ENCODE measurements at regions of chr9 and their contacts with region 1.

Region 1: GRCh38 chr9:95726756-95727155 is 148.7 kb upstream of the ERCC6L2 start:
- DNase-seq: no peak
- ATAC-seq: peak; percentile 44 to 63

Region 2: DNA sequence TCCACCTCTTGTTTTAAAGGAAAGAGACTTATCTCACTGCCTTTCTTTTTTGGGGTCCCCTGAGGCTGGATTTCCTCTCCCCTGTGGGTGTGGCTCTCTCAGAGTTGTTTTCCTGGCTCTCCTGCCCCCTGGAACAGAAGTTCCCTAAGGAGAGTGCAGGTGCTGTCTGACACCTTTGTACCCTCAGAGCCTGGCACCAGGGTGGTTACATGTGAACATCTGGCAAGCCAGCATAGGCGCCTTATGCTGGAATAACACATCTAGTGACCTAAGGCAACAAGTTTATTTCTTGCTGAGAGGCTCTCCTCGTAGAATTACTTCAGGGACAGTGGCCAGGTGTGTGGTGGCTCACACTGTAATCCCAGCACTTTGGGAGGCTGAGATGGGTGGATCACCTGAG is 37.1 kb before region 1 on chr9:
- intact Hi-C with region 1: no loop called
- DNase-seq: no peak
- ATAC-seq: no peak

Region 3: DNA sequence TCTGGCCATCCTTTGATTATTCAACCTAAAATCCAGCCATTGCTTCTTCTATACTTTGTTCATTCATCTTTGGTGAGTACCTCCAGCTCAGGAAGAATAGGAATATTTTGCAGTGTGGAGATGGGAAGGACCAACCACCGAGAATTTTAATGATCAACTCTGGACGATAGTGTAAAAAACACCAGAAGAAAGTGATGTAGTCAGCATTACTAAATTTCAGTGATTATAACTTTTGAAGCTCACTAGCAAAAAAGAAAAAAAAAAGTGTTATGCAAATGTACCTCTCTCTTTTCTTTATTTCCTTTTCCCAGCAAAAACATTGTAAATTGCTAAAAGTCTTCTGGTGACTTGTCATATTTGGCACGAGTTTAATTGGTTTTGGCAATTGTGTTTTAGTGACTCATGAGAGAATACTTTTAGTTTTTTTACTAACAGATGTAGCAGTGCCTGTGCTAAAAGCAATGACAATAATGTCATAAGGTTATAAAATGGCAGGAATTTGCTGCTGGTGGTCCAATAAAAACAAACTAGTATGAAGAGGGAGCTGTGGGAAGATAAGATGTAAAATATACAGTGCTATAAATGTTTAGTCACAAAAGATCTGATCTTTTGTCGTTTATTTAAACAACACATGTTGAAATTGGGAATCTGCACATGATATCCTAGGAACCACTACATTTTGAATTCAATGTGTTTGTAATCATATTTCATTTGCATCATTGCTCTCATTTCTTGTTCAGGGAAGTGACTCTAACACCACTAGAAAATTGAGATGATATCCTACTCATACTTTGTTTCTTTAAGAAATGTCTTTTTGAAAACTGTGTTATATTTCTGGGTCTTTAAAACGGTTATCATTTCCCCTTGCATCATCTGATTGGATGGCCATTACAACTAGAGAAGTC is 67.4 kb after region 1 on chr9:
- intact Hi-C with region 1: no loop called
- DNase-seq: no peak
- ATAC-seq: peak; percentile 41 to 86

Region 4: DNA sequence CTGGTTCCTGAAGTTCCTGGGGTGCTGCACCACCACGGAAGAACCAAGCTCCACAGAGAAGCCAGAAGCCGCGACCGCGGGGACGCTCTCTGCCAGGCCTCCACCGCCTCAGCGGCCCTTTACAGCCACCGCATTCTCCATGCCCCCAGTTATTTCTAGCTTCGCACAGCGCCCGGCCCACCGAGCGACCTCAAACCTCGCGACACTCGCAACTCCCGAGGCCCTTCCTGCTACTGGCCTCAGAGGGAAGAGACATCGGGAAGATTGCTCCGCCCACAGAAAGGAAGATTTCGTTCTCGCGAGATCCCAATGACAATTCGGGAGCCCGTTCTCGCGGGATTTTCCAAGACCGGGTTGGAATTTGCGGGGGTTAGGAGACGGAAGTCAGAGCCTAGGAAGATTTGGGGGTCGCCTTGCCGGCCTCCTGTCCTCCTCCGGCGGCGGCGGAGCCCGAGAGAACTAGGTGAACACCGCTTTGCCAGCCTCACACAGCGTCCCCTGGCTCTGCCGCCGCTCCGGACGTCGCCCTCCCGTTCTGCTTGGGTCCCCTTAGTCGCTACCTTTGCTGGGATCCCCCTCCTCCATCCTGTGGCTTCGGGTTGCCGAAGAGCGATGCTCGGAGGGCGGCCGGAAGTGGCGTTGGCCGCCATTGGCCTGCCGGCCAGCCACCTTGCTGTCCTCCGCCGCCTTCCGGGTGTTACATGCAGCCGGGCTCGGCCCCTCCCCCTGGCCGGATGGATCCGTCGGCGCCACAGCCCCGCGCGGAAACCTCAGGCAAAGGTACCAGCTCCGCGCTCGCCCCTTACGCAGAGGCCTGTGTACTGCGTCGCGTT is 148.8 kb after region 1 on chr9 and contains the start of gene ERCC6L2:
- intact Hi-C with region 1: loop called in 1 of 2 experiments (anchors 10 kb)
- DNase-seq: peak; percentile 96
- ATAC-seq: peak; percentile 96 to 97
- total RNA-seq, gene ERCC6L2: 22.9 to 37.3 TPM

Region 5: DNA sequence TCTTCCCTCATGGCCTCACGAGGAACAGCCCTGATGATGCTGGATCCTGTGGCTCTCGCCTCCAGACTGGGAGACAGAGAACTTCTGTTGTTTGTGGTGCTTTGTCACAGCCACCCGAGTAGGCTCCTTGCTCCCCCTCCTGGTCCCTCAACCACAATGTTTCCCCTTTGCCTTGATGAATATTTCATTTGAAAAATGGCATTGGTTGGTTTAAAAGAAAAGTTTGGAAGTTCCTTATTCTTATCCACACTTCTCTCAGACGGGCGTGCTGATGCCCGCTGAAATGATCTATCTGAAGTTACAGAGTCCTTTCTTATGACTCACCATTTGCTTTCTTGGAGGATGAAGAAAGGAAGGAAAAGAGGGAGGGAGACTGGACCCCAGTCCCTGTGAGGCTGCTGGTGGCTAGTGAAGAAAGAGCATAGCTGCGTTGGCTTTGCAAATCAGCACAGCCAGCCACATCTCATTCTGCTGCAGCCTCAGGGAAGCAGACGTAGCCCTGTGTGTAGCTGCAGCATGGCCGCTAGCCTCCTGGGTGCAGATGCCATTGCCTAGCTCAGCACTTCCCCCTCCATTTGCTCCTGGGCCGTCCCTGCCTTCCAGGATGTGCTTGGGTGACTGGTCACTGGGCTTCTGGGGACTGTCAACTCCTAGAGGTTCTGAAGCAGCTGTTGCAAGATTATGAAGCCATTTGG is 334.7 kb after region 1 on chr9:
- intact Hi-C with region 1: loop called in 1 of 2 experiments (anchors 10 kb)
- DNase-seq: peak; percentile 59
- ATAC-seq: peak; percentile 80 to 85

Region 6: DNA sequence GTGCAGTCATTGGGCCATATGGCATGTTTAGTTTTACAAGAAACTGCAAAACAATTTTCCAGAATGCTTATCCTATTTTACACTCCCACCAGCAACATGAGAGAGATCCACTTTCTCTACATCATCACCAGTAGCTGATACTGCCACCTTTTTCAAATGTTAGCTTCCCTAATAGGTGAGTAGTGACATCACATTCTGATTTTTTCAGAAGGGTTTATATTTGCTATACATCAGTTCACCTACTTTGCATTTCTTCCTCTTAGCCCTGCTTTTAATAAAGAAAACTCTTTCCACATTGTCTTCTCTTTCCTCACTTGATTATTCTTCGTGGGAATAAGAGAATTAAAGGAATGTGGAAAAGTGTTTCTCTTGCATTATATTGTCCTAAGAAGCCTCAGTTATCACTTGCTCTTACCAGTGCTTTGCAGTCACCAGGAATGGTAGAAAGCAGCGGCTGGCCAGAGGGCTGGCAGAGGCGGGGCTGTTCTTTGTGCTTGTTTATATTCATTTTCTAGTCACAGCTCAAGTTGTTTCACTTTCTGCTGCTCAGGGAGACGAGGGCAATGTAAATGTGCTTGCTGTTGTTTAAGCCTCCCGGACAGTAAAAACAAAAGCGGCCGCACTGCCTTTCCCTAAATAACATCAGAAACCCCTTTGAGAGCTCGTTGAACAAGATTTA is 410.4 kb after region 1 on chr9:
- intact Hi-C with region 1: no loop called
- DNase-seq: no peak
- ATAC-seq: peak in 1 of 2 donors; percentile 43

Region 7: DNA sequence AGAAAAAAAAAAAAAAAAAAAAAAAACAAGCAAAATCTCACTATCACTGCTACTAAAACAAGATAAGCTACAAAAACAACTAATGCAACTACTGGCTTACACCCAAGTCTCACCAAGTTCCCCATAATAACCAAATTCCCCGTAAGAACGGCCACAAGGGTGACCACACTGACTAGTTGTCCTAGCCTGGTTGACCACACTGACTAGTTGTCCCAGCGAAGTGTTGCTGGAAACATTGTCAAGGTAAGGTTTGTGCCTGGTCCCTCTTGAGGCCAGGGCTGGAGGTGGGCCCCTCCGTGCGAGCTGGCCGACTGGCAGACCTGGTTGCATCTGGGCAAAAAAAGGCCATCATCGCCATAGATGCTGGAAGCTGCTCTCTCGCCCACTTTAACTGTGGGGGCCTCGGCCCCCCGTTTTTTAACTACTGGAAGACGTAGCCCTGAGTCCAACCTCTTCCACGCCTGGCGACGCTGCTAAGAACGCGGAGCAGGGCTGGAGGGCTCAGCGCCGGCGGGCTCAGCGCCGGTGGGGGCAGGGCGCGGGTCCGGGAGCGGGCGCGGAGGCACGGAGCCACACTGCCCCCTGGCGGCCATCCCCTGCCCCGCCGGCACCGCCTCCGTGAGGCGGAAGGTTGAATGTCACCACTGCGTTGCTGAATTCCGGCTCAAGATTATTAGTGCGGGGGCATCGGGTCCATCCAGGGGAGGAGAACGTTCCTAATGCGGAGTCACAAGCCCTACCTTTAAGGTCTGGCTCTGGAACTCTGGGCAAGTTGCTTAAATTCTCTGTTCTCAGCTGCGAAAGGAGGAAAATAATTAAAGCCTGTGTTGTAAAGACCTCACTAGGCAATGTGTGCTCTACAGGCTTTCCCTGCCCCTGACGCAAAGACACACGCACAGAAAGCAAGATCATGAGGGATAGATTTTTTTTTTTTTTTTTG is 491.3 kb after region 1 on chr9:
- intact Hi-C with region 1: loop called (anchors 2 to 5 kb)
- DNase-seq: peak; percentile 76
- ATAC-seq: peak; percentile 91 to 94

Measured in left cardiac atrium (tissue), 4 donors.